Transverse colon (tissue), 4 donors: ENCODE measurements at regions of chr1 and their contacts with region 1.

Region 1: DNA sequence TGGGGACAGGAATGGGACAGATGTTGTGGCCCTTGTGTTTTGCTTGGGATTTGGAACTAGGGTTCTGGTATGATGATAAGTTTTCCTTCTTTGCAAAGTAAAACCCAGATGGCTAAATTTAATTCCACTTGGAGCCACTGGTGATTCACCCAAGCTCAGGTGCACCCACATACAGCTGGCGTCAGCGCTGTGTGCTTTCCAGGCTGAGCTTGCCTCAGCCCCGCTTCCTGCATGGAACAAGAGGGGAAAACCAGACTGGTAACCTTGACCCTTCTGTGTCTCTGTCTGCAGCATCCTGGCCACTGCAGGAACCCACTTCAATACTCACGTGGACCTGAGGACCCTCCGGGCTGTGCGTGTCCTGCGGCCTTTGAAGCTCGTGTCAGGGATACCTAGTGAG is 94.2 kb downstream of the CACNA1E start:
- DNase-seq: no peak
- H3K4me3 ChIP-seq: no peak overlapping the region
- H3K27ac ChIP-seq: no peak overlapping the region
- H3K4me1 ChIP-seq: no peaks in the 10 kb centered on the region
- H3K27me3 ChIP-seq: no peaks in the 10 kb centered on the region
- CTCF ChIP-seq: no peak
- EP300 ChIP-seq: no peak
- POLR2A ChIP-seq: no peak

Region 2: GRCh38 chr1:181592255-181592859 is 14.9 kb after region 1 on chr1:
- in situ Hi-C with region 1: no loop called
- intact Hi-C with region 1: loop called (anchors 1 kb)
- DNase-seq: no peak
- H3K4me3 ChIP-seq: no peak overlapping the region
- H3K27ac ChIP-seq: no peak overlapping the region
- H3K4me1 ChIP-seq: no peaks in the 10 kb centered on the region
- H3K27me3 ChIP-seq: peaks cover 9% of the 10 kb centered on the region
- CTCF ChIP-seq: no peak
- EP300 ChIP-seq: no peak
- POLR2A ChIP-seq: no peak